Psoas muscle (tissue), 8 donors: ENCODE measurements at regions of chr1 and their contacts with region 1.

Region 1: GRCh38 chr1:212118167-212118871 is 82.8 kb downstream of the DTL start:
- DNase-seq: no peak
- ATAC-seq: peak in 1 of 4 donors; percentile 27
- H3K4me3 ChIP-seq: no peak overlapping the region
- H3K27ac ChIP-seq: peak overlapping the region; percentile 90
- H3K4me1 ChIP-seq: peaks cover 27% of the 10 kb centered on the region
- H3K27me3 ChIP-seq: no peaks in the 10 kb centered on the region
- CTCF ChIP-seq: no peak

Region 2: GRCh38 chr1:212077051-212077450 is 41.3 kb before region 1 on chr1:
- intact Hi-C with region 1: loop called (anchors 2 to 5 kb)
- DNase-seq: no peak
- ATAC-seq: peak; percentile 38 to 66 (median 53)
- H3K4me3 ChIP-seq: no peak overlapping the region
- H3K27ac ChIP-seq: peak overlapping the region; percentile 87
- H3K4me1 ChIP-seq: no peaks in the 10 kb centered on the region
- H3K27me3 ChIP-seq: no peaks in the 10 kb centered on the region
- CTCF ChIP-seq: no peak

Region 3: GRCh38 chr1:212234431-212235395 is 116.4 kb after region 1 on chr1:
- intact Hi-C with region 1: loop called in 1 of 2 experiments (anchors 5 kb)
- DNase-seq: peak; percentile 26 to 61
- ATAC-seq: peak; percentile 95 to 98 (median 96)
- H3K4me3 ChIP-seq: no peak overlapping the region
- H3K27ac ChIP-seq: peak overlapping the region; percentile 90
- H3K4me1 ChIP-seq: peaks cover 60% of the 10 kb centered on the region
- H3K27me3 ChIP-seq: no peaks in the 10 kb centered on the region
- CTCF ChIP-seq: no peak